ENCODE measurements at regions of chr11 and their contacts with region 1.

Region 1: DNA sequence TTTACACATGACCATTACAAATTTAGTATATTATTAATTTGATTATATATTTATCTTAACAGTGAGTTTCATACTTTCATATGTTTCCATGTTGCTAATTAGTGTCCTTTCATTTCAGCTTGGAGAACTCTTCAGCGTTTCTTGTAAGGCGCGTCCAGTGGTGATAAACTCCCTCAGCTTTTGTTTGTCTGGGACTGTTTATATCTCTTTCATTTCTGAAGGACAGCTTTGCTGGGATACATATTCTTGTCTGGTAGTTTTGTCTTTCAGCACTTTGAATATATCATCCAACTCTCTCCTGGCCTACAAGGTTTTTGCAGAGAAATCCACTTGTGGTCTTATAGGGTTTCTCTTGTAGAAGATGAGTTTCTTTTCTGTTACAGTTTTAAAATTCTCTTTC is 12.4 kb downstream of the BIRC2 start:
- DNase-seq: no peak
- ATAC-seq: no peak
- H3K4me3 ChIP-seq: no peak overlapping the region
- H3K27ac ChIP-seq: no peak overlapping the region
- H3K4me1 ChIP-seq: no peaks in the 10 kb centered on the region
- H3K27me3 ChIP-seq: no peaks in the 10 kb centered on the region
- CTCF ChIP-seq: no peak
- POLR2A ChIP-seq: no peak

Region 2: GRCh38 chr11:102293873-102294601 is 65.3 kb before region 1 on chr11:
- intact Hi-C with region 1: loop called in 1 of 2 experiments (anchors 10 kb)
- DNase-seq: no peak
- ATAC-seq: peak; percentile 89 to 98 (median 92)
- H3K4me3 ChIP-seq: no peak overlapping the region
- H3K27ac ChIP-seq: no peak overlapping the region
- H3K4me1 ChIP-seq: no peaks in the 10 kb centered on the region
- H3K27me3 ChIP-seq: no peaks in the 10 kb centered on the region
- CTCF ChIP-seq: peak; percentile 70 to 74 (median 71)
- POLR2A ChIP-seq: no peak

Measured in right lobe of liver (tissue), 6 donors.